ENCODE measurements at regions of chr11 and their contacts with region 1.

Region 1: DNA sequence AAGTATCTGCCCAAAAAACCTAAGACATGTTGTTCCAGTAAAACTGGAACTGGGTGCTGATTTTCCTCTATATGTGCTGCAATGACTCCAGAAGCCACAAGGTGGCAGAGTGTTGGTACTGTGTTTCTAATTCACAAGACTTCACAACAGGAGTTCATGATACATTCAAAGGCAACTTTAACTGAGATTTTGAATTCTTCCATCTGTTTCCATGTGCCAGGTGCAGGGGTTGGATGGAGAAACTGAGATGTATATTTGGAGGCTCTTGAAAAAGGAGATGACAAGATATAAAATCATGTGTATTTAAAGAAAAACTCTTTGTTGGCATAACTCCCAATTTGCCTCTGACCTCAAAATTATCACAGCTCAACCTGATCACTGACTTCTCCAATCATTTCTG is 1098.6 kb upstream of the CCDC90B start:
- DNase-seq: peak; percentile 44
- H3K4me3 ChIP-seq: no peak overlapping the region
- H3K27ac ChIP-seq: no peak overlapping the region
- H3K4me1 ChIP-seq: no peaks in the 10 kb centered on the region
- H3K27me3 ChIP-seq: no peaks in the 10 kb centered on the region
- CTCF ChIP-seq: peak; percentile 61 to 70
- POLR2A ChIP-seq: no peak

Region 2: GRCh38 chr11:84414920-84415319 is 30.2 kb after region 1 on chr11:
- CTCF ChIA-PET with region 1: no interaction called
- POLR2A ChIA-PET with region 1: no interaction called
- dilution Hi-C with region 1: no loop called
- intact Hi-C with region 1: loop called (anchors 1 kb)
- DNase-seq: no peak
- H3K4me3 ChIP-seq: no peak overlapping the region
- H3K27ac ChIP-seq: no peak overlapping the region
- H3K4me1 ChIP-seq: no peaks in the 10 kb centered on the region
- H3K27me3 ChIP-seq: no peaks in the 10 kb centered on the region
- CTCF ChIP-seq: no peak
- POLR2A ChIP-seq: no peak